HEK293 (cell line): ENCODE measurements at regions of chr1 and their contacts with region 1.

Region 1: DNA sequence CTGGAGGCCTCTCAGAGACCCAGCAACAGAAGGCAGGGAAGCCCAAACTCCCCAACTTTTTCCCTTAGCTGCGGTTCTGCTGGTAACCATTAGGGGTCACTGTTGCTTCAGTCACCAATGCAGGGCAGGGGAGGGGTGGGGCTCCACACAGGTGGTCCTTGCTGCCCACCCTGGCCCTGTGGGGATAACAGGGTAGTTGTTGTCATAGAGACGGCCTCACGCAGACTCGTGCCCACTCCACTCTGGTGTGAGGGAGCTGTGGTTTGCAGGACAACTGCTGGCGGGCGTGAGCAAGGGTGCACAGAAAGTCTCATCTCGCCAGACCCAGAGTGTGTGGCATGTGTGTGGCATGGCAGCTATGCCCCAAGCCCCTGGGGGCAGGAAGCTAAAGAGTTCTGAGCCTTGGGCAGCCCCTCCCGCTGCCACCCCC is 19.9 kb downstream of the INSRR start:
- H3K4me3 ChIP-seq: no peak overlapping the region
- H3K27ac ChIP-seq: no peak overlapping the region
- H3K4me1 ChIP-seq: no peaks in the 10 kb centered on the region
- CTCF ChIP-seq: peak; percentile 78; the same call in 1 of the 2 replicates

Region 2: GRCh38 chr1:156821801-156822200 is 17.2 kb before region 1 on chr1:
- CTCF ChIA-PET with region 1: interaction called, 44 read pairs
- POLR2A ChIA-PET with region 1: no interaction called
- H3K4me3 ChIP-seq: no peak overlapping the region
- H3K27ac ChIP-seq: no peak overlapping the region
- H3K4me1 ChIP-seq: no peaks in the 10 kb centered on the region
- CTCF ChIP-seq: no peak

Region 3: GRCh38 chr1:156860113-156860627 is 21.2 kb after region 1 on chr1:
- CTCF ChIA-PET with region 1: interaction called, 119 read pairs
- POLR2A ChIA-PET with region 1: interaction called, 3 read pairs
- H3K4me3 ChIP-seq: peak overlapping the region; percentile 35
- H3K27ac ChIP-seq: no peak overlapping the region
- H3K4me1 ChIP-seq: peaks cover 2% of the 10 kb centered on the region; the same call in 1 of the 2 replicates
- CTCF ChIP-seq: peak; percentile 90

Region 4: GRCh38 chr1:156920233-156921052 is 81.4 kb after region 1 on chr1 and contains the start of gene LRRC71:
- CTCF ChIA-PET with region 1: interaction called, 16 read pairs
- POLR2A ChIA-PET with region 1: no interaction called
- H3K4me3 ChIP-seq: no peak within 1 kb of the TSS
- H3K27ac ChIP-seq: no peak within 1 kb of the TSS
- H3K4me1 ChIP-seq: no peaks in the 10 kb centered on the region
- CTCF ChIP-seq: peak; percentile 88

Region 5: DNA sequence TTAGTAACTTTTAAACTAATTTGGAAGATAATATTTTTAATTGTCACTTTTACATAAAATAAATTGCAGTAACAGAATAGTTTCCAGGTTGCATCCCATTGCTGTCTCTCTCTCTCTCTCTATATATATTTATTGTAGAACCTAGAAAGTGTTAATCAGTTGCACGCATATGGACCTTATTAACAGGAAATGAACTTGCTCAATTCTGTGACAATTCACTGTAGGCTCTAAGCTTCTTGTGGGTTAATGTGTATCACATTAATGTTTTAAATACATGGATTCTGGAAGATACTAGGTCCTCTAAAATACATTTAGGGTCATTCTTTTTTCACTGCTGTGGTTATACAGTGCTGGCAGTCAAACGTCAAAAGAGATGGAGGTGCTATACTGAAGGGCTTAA is 114.6 kb after region 1 on chr1:
- CTCF ChIA-PET with region 1: no interaction called
- POLR2A ChIA-PET with region 1: interaction called, 12 read pairs
- H3K4me3 ChIP-seq: no peak overlapping the region
- H3K27ac ChIP-seq: no peak overlapping the region
- H3K4me1 ChIP-seq: no peaks in the 10 kb centered on the region
- CTCF ChIP-seq: no peak